Heart left ventricle (tissue), 16 donors: ENCODE measurements at regions of chr9 and their contacts with region 1.

Region 1: GRCh38 chr9:14030375-14031059 is 283.4 kb downstream of the NFIB start:
- DNase-seq: no peak
- ATAC-seq: peak in 3 of 4 donors; percentile 41 to 53 (median 47)
- H3K4me3 ChIP-seq: peak overlapping the region in 11 of 12 donors; percentile 23 to 52 (median 40)
- H3K27ac ChIP-seq: peak overlapping the region; percentile 82 to 92 (median 86)
- H3K4me1 ChIP-seq: peaks cover 0 to 64% (median 32%) of the 10 kb centered on the region in 12 donors
- H3K27me3 ChIP-seq: no peaks in the 10 kb centered on the region
- CTCF ChIP-seq: no peak
- POLR2A ChIP-seq: no peak

Region 2: DNA sequence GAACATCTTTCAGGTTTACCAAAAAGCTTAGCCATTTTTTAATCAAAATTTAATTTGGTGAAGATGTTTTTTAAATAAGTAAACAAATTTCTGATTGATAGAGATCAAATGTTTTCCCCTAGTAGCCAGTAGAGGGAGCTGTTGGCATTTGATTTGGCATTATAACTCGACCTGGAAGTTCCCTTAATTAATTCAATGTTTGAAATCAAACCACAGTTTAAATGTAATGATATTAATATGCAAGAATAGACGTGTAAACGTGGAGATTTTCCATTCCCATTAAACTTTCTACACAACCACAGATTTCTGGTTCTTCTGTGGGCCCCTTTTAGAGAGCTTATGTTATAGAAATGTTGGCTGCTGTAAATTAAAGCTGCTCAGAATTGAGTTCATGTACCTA is 602.9 kb before region 1 on chr9:
- intact Hi-C with region 1: loop called in 1 of 10 experiments (anchors 10 kb)
- DNase-seq: no peak
- ATAC-seq: peak in 2 of 4 donors; percentile 42 to 47
- H3K4me3 ChIP-seq: peak overlapping the region in 1 of 12 donors; percentile 12
- H3K27ac ChIP-seq: peak overlapping the region in 9 of 12 donors; percentile 0 to 63 (median 33)
- H3K4me1 ChIP-seq: peaks cover 0 to 23% (median 13%) of the 10 kb centered on the region in 12 donors
- H3K27me3 ChIP-seq: no peaks in the 10 kb centered on the region
- CTCF ChIP-seq: peak; percentile 68 to 88 (median 82)
- POLR2A ChIP-seq: no peak

Region 3: GRCh38 chr9:13787234-13787833 is 243.2 kb before region 1 on chr9:
- intact Hi-C with region 1: loop called in 2 of 10 experiments (anchors 5 kb)
- DNase-seq: peak in 3 of 5 donors; percentile 43 to 73 (median 61)
- ATAC-seq: peak; percentile 72 to 92 (median 88)
- H3K4me3 ChIP-seq: peak overlapping the region in 10 of 12 donors; percentile 5 to 50 (median 31)
- H3K27ac ChIP-seq: peak overlapping the region; percentile 81 to 95 (median 88)
- H3K4me1 ChIP-seq: peaks cover 0 to 43% (median 21%) of the 10 kb centered on the region in 12 donors
- H3K27me3 ChIP-seq: no peaks in the 10 kb centered on the region
- CTCF ChIP-seq: no peak
- POLR2A ChIP-seq: no peak

Region 4: GRCh38 chr9:13975611-13976290 is 54.8 kb before region 1 on chr9:
- intact Hi-C with region 1: no loop called
- DNase-seq: no peak
- ATAC-seq: no peak
- H3K4me3 ChIP-seq: no peak overlapping the region
- H3K27ac ChIP-seq: no peak overlapping the region
- H3K4me1 ChIP-seq: peaks cover 0 to 24% (median 7%) of the 10 kb centered on the region in 12 donors
- H3K27me3 ChIP-seq: no peaks in the 10 kb centered on the region
- CTCF ChIP-seq: no peak
- POLR2A ChIP-seq: no peak

Region 5: GRCh38 chr9:14080959-14081542 is 50.5 kb after region 1 on chr9:
- intact Hi-C with region 1: loop called in 1 of 10 experiments (anchors 10 kb)
- DNase-seq: no peak
- ATAC-seq: no peak
- H3K4me3 ChIP-seq: no peak overlapping the region
- H3K27ac ChIP-seq: no peak overlapping the region
- H3K4me1 ChIP-seq: peaks cover 0 to 6% (median 0%) of the 10 kb centered on the region in 12 donors
- H3K27me3 ChIP-seq: no peaks in the 10 kb centered on the region
- CTCF ChIP-seq: no peak
- POLR2A ChIP-seq: no peak

Region 6: DNA sequence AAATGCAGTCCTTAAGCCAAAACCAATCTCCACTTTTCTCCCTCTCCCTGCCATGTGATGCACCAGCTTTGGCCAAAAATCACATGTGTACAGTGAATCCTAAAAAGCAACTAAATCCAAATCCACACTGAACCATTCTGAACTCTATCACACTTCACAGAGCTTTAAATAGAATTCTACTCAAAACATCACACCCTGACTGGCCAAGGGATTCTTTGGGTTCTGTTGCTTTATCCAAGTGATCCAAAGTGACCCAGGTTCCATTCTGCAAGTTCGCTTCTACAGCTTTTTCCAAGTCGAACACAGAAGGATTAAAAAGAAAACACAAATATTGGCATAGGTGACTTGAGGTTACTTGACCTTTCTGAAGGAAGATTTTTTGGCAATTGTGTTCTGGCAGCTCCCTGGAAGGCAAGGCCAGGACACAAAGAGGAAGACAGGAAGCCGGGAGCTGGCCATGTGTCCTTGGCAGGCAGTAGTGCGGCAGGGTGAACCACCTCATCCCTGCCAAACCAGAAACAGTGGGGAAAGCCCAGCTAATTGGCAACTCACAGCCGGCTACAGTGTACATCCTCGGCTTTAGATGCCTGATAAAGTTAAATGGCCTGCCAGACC is 168.4 kb after region 1 on chr9:
- intact Hi-C with region 1: loop called in 2 of 10 experiments (anchors 5 to 10 kb)
- DNase-seq: peak; percentile 74 to 83 (median 78)
- ATAC-seq: peak; percentile 74 to 91 (median 86)
- H3K4me3 ChIP-seq: peak overlapping the region in 6 of 12 donors; percentile 1 to 32 (median 8)
- H3K27ac ChIP-seq: peak overlapping the region; percentile 21 to 83 (median 68)
- H3K4me1 ChIP-seq: peaks cover 16 to 98% (median 77%) of the 10 kb centered on the region in 12 donors
- H3K27me3 ChIP-seq: no peaks in the 10 kb centered on the region
- CTCF ChIP-seq: no peak
- POLR2A ChIP-seq: no peak

Region 7: DNA sequence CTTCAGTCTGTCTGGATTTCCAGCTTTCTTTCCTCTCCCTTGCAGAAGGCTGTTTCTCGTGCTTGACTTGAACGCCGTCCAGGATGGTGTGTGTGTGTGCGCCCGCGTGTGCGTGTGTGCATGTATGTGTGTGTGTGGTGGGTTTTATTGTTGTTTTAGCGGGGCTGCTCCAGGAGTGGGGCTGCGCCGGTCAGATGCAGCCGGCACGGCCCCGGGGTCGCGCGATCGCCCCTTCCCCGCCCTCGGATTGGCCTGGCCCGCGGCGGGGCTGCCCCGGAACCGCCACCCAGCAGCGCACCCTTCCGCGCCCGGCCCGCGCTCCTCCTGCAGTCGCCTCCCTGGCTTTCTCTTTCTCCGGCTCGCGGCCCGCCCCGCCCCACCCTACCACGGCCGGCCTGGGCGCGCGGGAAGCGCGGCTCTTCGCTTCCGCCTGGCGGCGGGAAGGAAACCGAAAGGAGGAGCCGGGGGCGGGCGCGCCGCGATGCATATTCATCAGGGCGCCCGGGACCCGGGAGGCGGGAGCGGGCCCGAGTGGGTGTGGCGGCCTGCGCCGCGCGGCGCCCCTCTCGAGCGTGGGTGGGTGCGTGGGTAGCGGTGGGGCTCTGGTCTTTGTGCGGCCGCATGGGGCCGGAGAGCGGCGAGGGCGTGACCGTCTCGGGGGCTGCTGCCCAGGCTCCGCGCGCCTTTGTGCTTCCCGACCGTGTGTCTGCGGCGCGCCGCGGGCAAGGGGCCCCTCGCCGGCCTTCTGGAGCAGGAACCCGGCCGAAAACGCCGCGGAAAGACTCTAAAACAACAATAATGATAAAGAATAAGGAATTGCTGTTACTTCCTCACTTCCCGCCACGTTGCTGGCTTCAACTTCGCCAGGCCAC is 291.9 kb after region 1 on chr9:
- intact Hi-C with region 1: loop called in 6 of 10 experiments (anchors 2 to 10 kb)
- DNase-seq: peak; percentile 94 to 96 (median 95)
- ATAC-seq: peak; percentile 86 to 96 (median 92)
- H3K4me3 ChIP-seq: peak overlapping the region; percentile 65 to 84 (median 78)
- H3K27ac ChIP-seq: peak overlapping the region; percentile 93 to 100 (median 98)
- H3K4me1 ChIP-seq: peaks cover 8 to 82% (median 44%) of the 10 kb centered on the region in 12 donors
- H3K27me3 ChIP-seq: peaks cover 0 to 6% (median 0%) of the 10 kb centered on the region in 9 donors
- CTCF ChIP-seq: peak; percentile 17 to 75 (median 60)
- POLR2A ChIP-seq: peak in 1 of 2 donors; percentile 55